ENCODE measurements at regions of chr3 and their contacts with region 1.

Region 1: DNA sequence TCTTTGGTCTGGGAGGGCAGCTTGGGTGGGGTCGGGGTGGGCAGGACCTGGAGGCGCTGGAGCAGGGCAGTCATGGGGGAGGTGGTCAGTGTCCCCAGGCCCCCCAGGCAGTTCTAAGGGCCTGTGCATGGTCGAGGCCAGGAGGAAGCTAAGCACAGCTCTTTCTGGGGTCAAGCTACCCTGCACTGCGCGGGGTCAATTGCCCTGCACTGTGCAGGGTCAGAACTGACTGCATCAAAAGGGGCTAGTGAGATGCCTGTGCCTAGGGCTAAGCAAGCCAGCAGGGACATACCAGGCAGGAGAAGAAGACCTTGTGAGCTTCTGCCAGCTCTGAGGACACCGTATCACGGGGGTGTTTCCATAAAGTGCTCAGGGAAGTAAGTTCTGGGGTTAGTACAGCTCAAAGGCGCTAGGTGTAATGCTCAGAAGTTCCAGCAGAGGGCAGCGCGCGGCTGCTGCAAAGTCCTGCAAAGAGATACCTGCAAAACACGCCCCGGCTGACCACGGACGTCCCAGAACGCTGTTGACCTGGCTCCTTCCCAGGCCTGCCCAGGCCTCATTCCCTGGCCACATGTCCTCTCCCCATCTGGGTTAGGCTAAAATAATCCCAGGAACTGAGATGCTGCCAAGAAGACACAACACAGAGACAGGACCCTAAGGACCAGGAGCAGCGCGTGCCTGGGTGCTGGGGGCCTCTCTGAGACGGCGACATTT is 18.8 kb upstream of the IQSEC1 start:
- DNase-seq: peak; percentile 63
- H3K4me3 Mint-ChIP-seq: no peak overlapping the region
- H3K27ac Mint-ChIP-seq: no peak overlapping the region
- H3K4me1 Mint-ChIP-seq: peaks cover 7% of the 10 kb centered on the region
- H3K27me3 Mint-ChIP-seq: no peaks in the 10 kb centered on the region
- CTCF ChIP-seq: peak; percentile 97

Region 2: GRCh38 chr3:13103416-13104058 is 11.5 kb after region 1 on chr3:
- CTCF ChIA-PET with region 1: interaction called, 16 read pairs
- POLR2A ChIA-PET with region 1: no interaction called
- intact Hi-C with region 1: no loop called
- DNase-seq: no peak
- H3K4me3 Mint-ChIP-seq: no peak overlapping the region
- H3K27ac Mint-ChIP-seq: no peak overlapping the region
- H3K4me1 Mint-ChIP-seq: no peaks in the 10 kb centered on the region
- H3K27me3 Mint-ChIP-seq: peaks cover 43% of the 10 kb centered on the region
- CTCF ChIP-seq: no peak

Region 3: DNA sequence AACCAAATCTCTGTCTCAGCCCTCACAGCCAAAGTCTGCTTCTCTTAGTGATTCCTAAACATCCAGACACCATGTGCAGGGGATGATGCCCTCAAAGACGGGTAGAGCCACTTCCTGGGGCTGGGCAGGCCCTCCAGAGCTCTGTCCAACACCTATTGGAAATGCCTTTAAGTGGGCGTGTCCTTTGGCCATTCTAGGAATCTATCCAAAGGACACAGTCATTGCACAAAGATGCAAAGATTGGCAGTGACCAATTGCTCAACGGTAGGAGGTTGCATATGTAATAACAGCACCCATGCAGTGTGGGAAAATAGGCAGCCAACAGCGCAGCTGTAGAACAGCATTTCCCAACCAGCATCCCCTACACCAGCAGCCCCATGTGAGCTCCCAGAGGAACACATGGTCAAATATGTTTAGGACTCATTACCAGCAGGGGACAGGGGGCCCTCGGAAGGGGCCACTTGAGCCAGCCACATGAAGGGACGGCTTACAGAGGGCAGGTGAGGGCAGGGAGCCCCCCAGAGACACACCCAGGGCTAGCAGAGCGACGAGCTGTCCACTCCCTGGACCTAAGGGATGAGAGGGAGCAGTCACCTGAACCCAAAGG is 124.0 kb after region 1 on chr3:
- CTCF ChIA-PET with region 1: interaction called, 4 read pairs
- POLR2A ChIA-PET with region 1: no interaction called
- intact Hi-C with region 1: loop called (anchors 5 kb)
- DNase-seq: peak; percentile 93
- H3K4me3 Mint-ChIP-seq: no peak overlapping the region
- H3K27ac Mint-ChIP-seq: no peak overlapping the region
- H3K4me1 Mint-ChIP-seq: peaks cover 12% of the 10 kb centered on the region
- H3K27me3 Mint-ChIP-seq: no peaks in the 10 kb centered on the region
- CTCF ChIP-seq: no peak

Region 4: DNA sequence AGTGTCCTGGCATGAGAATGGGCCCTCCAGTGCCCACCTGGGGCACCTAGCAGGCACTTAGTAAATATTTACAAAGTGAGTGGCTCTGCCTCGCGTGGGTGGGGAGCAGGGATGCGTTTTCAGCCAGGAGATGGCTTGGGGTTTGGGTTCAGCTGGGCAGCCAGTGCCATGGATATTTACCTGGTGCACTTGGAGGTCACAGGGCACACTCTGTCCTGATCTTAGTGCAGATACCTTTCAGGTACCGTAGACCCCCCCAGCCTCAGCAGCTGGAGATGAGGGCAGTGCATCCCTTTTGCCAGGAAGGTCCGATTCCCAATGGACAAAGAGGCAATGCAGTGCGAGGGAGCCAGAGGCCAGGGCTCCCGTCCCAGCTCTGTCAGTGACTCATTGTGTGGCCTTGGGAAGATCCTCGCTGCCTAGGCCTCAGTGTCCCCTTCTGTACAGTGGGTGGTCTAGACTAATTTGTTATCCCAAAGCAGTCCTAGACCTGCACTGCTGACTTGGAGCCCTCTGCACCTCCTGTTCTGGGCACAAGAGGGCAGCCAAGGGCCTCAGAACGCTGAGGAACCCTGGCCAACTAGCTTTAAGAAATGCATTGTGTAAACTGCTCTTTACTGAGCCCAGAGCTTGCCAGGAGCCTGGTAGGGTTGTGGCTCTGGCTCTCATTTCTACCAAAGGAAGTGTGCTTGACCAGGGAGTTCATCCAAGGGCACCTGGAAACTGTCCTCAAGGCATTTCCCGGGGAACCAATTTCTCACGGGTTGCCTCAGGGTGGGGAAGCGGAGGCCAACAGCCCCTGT is 404.1 kb after region 1 on chr3:
- CTCF ChIA-PET with region 1: interaction called, 30 read pairs
- POLR2A ChIA-PET with region 1: no interaction called
- intact Hi-C with region 1: loop called (anchors 2 kb)
- DNase-seq: peak; percentile 80
- H3K4me3 Mint-ChIP-seq: no peak overlapping the region
- H3K27ac Mint-ChIP-seq: peak overlapping the region; percentile 19
- H3K4me1 Mint-ChIP-seq: peaks cover 14% of the 10 kb centered on the region
- H3K27me3 Mint-ChIP-seq: no peaks in the 10 kb centered on the region
- CTCF ChIP-seq: peak; percentile 96

Region 5: GRCh38 chr3:13544293-13544831 is 452.3 kb after region 1 on chr3:
- CTCF ChIA-PET with region 1: no interaction called
- POLR2A ChIA-PET with region 1: no interaction called
- intact Hi-C with region 1: no loop called
- DNase-seq: peak; percentile 92
- H3K4me3 Mint-ChIP-seq: no peak overlapping the region
- H3K27ac Mint-ChIP-seq: peak overlapping the region; percentile 74
- H3K4me1 Mint-ChIP-seq: peaks cover 33% of the 10 kb centered on the region
- H3K27me3 Mint-ChIP-seq: no peaks in the 10 kb centered on the region
- CTCF ChIP-seq: no peak